Psoas muscle (tissue), 8 donors: ENCODE measurements at regions of chr9 and their contacts with region 1.

Region 1: GRCh38 chr9:95127249-95128176 is 190.0 kb downstream of the FANCC start:
- DNase-seq: peak; percentile 88 to 93
- ATAC-seq: peak; percentile 91 to 96 (median 93)
- H3K4me3 ChIP-seq: peak overlapping the region; percentile 58
- H3K27ac ChIP-seq: peak overlapping the region; percentile 19
- H3K4me1 ChIP-seq: peaks cover 5% of the 10 kb centered on the region
- H3K27me3 ChIP-seq: no peaks in the 10 kb centered on the region
- CTCF ChIP-seq: peak; percentile 97

Region 2: DNA sequence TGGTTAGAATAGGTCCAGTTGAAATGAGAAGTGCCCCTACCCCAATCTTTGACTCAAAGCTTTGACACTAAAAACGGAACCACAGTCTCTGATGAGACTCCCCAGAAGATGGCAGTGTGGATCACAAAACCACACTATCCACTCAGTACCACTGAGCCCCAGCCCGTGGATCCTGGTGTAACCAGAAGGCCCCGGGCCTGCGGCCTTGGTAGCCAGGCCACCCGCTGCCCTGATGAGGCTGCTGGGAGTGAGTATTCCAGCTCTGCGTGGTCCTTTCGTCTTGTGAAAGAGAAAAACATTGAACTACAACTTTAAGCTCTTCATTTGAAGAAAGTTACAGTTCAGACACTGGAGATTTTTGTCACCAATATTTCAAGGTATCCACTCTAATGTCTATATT is 446.0 kb before region 1 on chr9:
- intact Hi-C with region 1: loop called (anchors 1 to 2 kb)
- DNase-seq: peak; percentile 78 to 85
- ATAC-seq: peak; percentile 96 to 100 (median 99)
- H3K4me3 ChIP-seq: no peak overlapping the region
- H3K27ac ChIP-seq: no peak overlapping the region
- H3K4me1 ChIP-seq: peaks cover 4% of the 10 kb centered on the region
- H3K27me3 ChIP-seq: no peaks in the 10 kb centered on the region
- CTCF ChIP-seq: peak; percentile 80

Region 3: DNA sequence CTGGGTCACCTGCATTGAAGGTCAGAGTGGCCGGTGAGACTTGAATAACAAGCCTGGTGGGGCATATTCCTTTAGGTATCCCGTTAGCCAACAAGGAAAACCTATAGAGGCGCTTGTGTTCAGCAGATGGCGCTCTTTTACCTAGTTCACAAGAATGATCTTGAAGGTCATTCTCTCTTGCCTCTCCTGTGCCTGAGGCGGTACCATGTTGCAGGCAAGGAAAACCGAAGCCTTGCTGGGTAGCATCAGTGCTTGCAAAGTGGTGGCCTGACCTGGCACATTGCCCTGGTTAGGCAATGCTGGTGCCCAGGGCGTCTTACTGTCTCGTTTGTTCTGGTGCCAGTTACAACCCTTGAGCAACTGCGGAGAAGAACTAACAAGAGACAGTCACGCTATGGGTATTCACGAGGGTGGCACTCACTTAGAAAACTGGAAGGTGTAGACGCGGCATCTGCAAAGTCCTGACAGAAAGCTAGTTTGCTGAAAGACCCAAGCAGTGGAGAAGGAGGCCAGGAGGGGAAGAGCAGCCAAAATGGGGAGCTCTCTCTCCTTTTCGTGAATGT is 344.3 kb before region 1 on chr9:
- intact Hi-C with region 1: loop called (anchors 2 to 5 kb)
- DNase-seq: peak; percentile 88 to 95
- ATAC-seq: peak; percentile 92 to 97 (median 94)
- H3K4me3 ChIP-seq: no peak overlapping the region
- H3K27ac ChIP-seq: peak overlapping the region; percentile 65
- H3K4me1 ChIP-seq: peaks cover 27% of the 10 kb centered on the region
- H3K27me3 ChIP-seq: no peaks in the 10 kb centered on the region
- CTCF ChIP-seq: peak; percentile 76

Region 4: DNA sequence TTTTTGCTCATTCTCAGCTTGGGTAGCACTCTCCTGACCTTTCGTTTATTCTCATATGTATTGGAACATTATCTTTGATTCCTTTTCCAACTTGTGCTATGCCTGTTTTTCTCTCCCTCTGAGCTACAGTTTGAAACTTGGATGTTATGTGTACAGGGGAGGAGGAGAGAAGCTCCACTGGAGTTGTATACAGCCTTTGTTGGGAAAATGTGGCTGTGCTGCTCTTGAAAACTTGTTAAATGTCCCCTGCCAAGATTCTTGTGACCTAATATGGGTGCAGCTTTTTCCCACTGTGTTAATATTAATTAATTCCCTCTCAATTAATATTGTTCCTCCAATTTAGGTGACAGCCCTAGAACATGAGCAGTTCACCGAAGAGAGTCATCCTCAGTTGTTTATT is 165.6 kb before region 1 on chr9:
- intact Hi-C with region 1: no loop called
- DNase-seq: no peak
- ATAC-seq: no peak
- H3K4me3 ChIP-seq: no peak overlapping the region
- H3K27ac ChIP-seq: no peak overlapping the region
- H3K4me1 ChIP-seq: no peaks in the 10 kb centered on the region
- H3K27me3 ChIP-seq: no peaks in the 10 kb centered on the region
- CTCF ChIP-seq: no peak